H1 (cell line): ENCODE measurements at regions of chr19 and their contacts with region 1.

Region 1: DNA sequence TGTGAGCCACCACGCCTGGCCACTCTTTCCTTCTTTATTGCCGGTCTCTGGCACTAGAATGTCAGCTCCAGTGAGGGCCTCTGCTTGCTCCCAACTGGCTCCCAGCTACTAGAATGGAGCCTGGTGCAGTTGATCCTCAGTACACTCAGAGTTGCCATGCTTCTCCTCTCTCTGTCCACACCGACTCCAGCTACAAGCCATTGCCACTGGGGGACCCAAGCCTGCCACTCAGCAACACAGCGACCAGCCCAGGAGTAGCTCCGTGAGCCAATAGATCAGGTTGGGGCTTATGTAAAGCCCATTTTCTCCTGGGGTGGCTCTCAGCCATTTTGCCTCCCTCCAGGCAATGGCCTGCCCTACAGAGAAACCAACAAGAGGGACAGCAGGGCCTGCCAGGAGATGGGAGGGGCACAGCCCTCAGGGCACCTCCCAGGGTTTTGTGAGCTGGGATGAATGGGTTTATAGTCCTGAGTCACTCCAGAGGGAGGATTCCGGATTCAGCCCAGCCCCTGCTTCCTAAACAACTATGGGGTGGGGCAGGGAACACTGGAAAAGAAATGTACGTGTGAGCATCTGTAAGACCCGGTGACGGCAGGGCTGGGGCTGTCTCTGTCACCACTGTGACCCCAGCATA is 36.5 kb downstream of the OPA3 start:
- DNase-seq: no peak
- H3K4me3 ChIP-seq: no peak overlapping the region
- H3K27ac ChIP-seq: no peak overlapping the region
- H3K4me1 ChIP-seq: peaks cover 0 to 3% (median 0%) of the 10 kb centered on the region in 4 experiments; a peak in 2 of 7 replicates
- H3K27me3 ChIP-seq: no peaks in the 10 kb centered on the region
- CTCF ChIP-seq: no peak
- EP300 ChIP-seq: no peak
- POLR2A ChIP-seq: no peak
- RAD21 ChIP-seq: no peak

Region 2: GRCh38 chr19:45370410-45371204 is 177.5 kb before region 1 on chr19 and contains the start of gene ERCC2:
- CTCF ChIA-PET with region 1: no interaction called
- POLR2A ChIA-PET with region 1: no interaction called
- DNase-seq: peak; percentile 93 to 100
- H3K4me3 ChIP-seq: peak within 1 kb of the TSS; percentile 82 to 97 (median 89)
- H3K27ac ChIP-seq: peak within 1 kb of the TSS; percentile 44; the same call in 1 of the 2 replicates
- H3K4me1 ChIP-seq: peaks cover 0 to 3% (median 0%) of the 10 kb centered on the region in 4 experiments; a peak in 4 of 7 replicates
- H3K27me3 ChIP-seq: no peaks in the 10 kb centered on the region
- CTCF ChIP-seq: no peak
- EP300 ChIP-seq: no peak
- POLR2A ChIP-seq: no peak; a peak in 2 of 3 replicates
- RAD21 ChIP-seq: no peak
- total RNA-seq, gene ERCC2: 93.4 and 107 TPM in 2 replicates

Region 3: GRCh38 chr19:45485305-45486077 is 62.6 kb before region 1 on chr19:
- CTCF ChIA-PET with region 1: interaction called, 16 read pairs
- POLR2A ChIA-PET with region 1: no interaction called
- DNase-seq: peak in 1 of 2 experiments; percentile 100
- H3K4me3 ChIP-seq: peak overlapping the region; percentile 32 to 69 (median 52)
- H3K27ac ChIP-seq: no peak overlapping the region; the same call in 1 of the 2 replicates
- H3K4me1 ChIP-seq: peaks cover 0 to 3% (median 0%) of the 10 kb centered on the region in 4 experiments; a peak in 1 of 7 replicates
- H3K27me3 ChIP-seq: no peaks in the 10 kb centered on the region
- CTCF ChIP-seq: peak; percentile 86 to 95 (median 92)
- EP300 ChIP-seq: no peak
- POLR2A ChIP-seq: no peak
- RAD21 ChIP-seq: peak; percentile 59 to 66

Region 4: GRCh38 chr19:45528651-45529419 is 19.3 kb before region 1 on chr19:
- CTCF ChIA-PET with region 1: interaction called, 12 read pairs
- POLR2A ChIA-PET with region 1: interaction called, 16 read pairs
- DNase-seq: peak; percentile 87 to 88
- H3K4me3 ChIP-seq: peak overlapping the region; percentile 50 to 68 (median 58)
- H3K27ac ChIP-seq: 0 out of 2 replicates have a peak overlapping the region, but pooled peaks have one; percentile 1
- H3K4me1 ChIP-seq: peaks cover 0 to 14% (median 9%) of the 10 kb centered on the region in 4 experiments; a peak in 5 of 7 replicates
- H3K27me3 ChIP-seq: peaks cover 0 to 5% (median under 1%) of the 10 kb centered on the region in 4 experiments; a peak in 4 of 7 replicates
- CTCF ChIP-seq: peak; percentile 7 to 26 (median 14)
- EP300 ChIP-seq: peak in 1 of 2 experiments; percentile 98; a peak in 2 of 3 replicates
- POLR2A ChIP-seq: peak in 1 of 2 experiments; percentile 85; a peak in 1 of 3 replicates
- RAD21 ChIP-seq: peak; percentile 23 to 42; a peak in 3 of 4 replicates